Ovary (tissue), 10 donors: ENCODE measurements at regions of chr11 and their contacts with region 1.

Region 1: GRCh38 chr11:75150879-75151278 is at the start of gene SLCO2B1:
- DNase-seq: no peak
- H3K4me3 ChIP-seq: peak within 1 kb of the TSS; percentile 9
- H3K27ac ChIP-seq: no peak within 1 kb of the TSS
- H3K4me1 ChIP-seq: no peaks in the 10 kb centered on the region
- H3K27me3 ChIP-seq: no peaks in the 10 kb centered on the region
- CTCF ChIP-seq: no peak
- EP300 ChIP-seq: no peak
- POLR2A ChIP-seq: no peak
- total RNA-seq, gene SLCO2B1: 12.6 to 79.4 (median 21.8) TPM

Region 2: GRCh38 chr11:75204685-75205563 is 54.0 kb after region 1 on chr11:
- intact Hi-C with region 1: loop called in 1 of 4 experiments (anchors 5 kb)
- DNase-seq: peak; percentile 52 to 86 (median 61)
- H3K4me3 ChIP-seq: no peak overlapping the region
- H3K27ac ChIP-seq: no peak overlapping the region
- H3K4me1 ChIP-seq: no peaks in the 10 kb centered on the region
- H3K27me3 ChIP-seq: no peaks in the 10 kb centered on the region
- CTCF ChIP-seq: peak in 2 of 3 donors; percentile 32 to 58
- EP300 ChIP-seq: no peak
- POLR2A ChIP-seq: no peak

Region 3: DNA sequence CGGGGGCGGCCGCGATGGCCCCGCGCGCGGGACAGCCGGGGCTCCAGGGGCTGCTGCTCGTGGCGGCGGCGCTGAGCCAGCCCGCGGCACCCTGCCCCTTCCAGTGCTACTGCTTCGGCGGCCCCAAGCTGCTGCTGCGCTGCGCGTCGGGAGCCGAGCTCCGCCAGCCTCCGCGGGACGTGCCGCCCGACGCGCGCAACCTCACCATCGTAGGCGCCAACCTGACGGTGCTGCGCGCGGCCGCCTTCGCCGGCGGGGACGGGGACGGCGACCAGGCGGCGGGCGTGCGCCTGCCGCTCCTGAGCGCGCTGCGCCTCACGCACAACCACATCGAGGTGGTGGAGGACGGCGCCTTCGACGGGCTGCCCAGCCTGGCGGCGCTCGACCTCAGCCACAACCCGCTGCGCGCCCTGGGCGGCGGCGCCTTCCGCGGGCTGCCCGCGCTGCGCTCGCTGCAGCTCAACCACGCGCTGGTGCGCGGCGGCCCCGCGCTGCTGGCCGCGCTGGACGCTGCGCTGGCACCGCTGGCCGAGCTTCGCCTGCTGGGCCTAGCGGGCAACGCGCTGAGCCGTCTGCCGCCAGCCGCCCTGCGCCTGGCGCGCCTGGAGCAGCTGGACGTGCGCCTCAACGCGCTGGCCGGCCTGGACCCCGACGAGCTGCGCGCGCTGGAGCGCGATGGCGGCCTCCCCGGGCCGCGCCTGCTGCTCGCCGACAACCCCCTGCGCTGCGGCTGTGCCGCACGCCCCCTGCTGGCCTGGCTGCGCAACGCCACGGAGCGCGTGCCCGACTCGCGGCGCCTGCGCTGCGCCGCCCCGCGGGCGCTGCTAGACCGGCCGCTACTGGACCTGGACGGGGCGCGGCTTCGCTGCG is 90.4 kb after region 1 on chr11:
- intact Hi-C with region 1: no loop called
- DNase-seq: peak; percentile 68 to 93 (median 76)
- H3K4me3 ChIP-seq: peak overlapping the region; percentile 40
- H3K27ac ChIP-seq: no peak overlapping the region
- H3K4me1 ChIP-seq: peaks cover 4% of the 10 kb centered on the region
- H3K27me3 ChIP-seq: no peaks in the 10 kb centered on the region
- CTCF ChIP-seq: peak; percentile 37 to 97 (median 93)
- EP300 ChIP-seq: no peak
- POLR2A ChIP-seq: peak; percentile 10

Region 4: DNA sequence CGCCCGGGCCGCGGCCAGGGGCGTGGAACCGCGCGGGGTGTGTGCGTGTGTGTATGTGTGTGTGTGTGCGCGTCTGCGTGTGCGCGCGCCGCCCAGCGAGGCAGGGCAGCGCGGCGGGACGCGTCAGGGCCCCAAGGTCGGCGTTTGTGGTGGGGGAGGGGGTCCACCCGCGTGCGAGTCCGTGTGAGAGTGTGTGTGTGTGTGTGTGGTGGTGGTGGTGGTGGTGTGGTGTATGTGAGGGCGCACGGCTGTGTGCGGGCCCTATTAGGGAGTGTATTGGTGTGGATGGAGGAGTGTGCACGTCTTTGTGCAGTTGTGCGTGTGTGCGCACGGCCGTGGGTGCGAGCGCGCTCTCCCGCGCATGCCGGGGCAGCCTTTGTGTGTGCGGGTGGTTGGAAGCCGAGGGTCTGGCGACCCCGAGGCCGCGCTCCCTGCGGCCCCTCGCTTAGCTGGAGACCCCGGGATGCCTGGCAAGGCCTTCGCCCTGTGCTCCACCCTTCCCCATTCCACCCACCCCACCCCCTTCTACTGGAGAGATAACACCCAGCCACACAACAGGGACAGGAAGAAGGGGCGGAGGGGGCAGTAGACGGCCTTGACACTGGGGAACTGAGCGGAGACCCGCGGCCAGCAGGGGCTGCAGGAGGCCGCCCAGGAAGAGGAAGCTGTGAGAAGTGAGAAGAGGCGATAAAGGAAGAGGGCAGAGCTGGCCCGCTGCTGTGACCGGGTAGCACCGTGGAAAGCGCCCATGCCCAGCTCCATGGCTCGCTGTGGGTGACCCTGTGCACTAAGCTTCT is 201.1 kb after region 1 on chr11:
- intact Hi-C with region 1: no loop called
- DNase-seq: peak; percentile 73 to 83 (median 79)
- H3K4me3 ChIP-seq: peak overlapping the region; percentile 86
- H3K27ac ChIP-seq: peak overlapping the region; percentile 58 to 72
- H3K4me1 ChIP-seq: peaks cover 27% of the 10 kb centered on the region
- H3K27me3 ChIP-seq: no peaks in the 10 kb centered on the region
- CTCF ChIP-seq: no peak
- EP300 ChIP-seq: no peak
- POLR2A ChIP-seq: no peak